ENCODE measurements at regions of chr9 and their contacts with region 1.

Region 1: GRCh38 chr9:89825669-89826068 is 220.9 kb downstream of the GADD45G start:
- DNase-seq: no peak
- H3K4me3 ChIP-seq: no peak overlapping the region
- H3K27ac ChIP-seq: no peak overlapping the region
- H3K4me1 ChIP-seq: no peaks in the 10 kb centered on the region
- H3K27me3 ChIP-seq: no peaks in the 10 kb centered on the region
- CTCF ChIP-seq: no peak
- POLR2A ChIP-seq: no peak

Region 2: DNA sequence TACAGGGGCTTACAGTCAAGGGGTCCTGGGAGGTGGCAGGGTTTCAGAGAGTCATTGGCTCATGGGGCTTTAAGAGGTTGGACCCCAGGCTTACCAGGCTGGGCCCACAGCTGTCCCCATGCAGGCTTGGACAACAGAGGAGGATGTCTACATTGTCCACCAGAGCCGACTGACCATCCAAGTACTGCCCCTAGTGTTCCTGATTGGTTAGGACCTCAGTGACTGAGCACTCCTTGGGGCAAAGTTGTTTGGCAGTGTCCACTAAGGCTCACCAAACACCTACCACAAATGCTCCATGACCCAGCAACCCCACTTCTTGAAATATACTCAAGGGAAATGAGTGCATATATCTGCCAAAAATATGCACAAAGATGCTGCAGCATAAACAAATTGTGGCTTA is 44.1 kb after region 1 on chr9:
- intact Hi-C with region 1: loop called (anchors 1 kb)
- DNase-seq: peak in 1 of 2 donors; percentile 22
- H3K4me3 ChIP-seq: no peak overlapping the region
- H3K27ac ChIP-seq: no peak overlapping the region
- H3K4me1 ChIP-seq: no peaks in the 10 kb centered on the region
- H3K27me3 ChIP-seq: no peaks in the 10 kb centered on the region
- CTCF ChIP-seq: no peak
- POLR2A ChIP-seq: no peak

Measured in breast epithelium (tissue), 4 donors.